ENCODE measurements at regions of chr17 and their contacts with region 1.

Region 1: DNA sequence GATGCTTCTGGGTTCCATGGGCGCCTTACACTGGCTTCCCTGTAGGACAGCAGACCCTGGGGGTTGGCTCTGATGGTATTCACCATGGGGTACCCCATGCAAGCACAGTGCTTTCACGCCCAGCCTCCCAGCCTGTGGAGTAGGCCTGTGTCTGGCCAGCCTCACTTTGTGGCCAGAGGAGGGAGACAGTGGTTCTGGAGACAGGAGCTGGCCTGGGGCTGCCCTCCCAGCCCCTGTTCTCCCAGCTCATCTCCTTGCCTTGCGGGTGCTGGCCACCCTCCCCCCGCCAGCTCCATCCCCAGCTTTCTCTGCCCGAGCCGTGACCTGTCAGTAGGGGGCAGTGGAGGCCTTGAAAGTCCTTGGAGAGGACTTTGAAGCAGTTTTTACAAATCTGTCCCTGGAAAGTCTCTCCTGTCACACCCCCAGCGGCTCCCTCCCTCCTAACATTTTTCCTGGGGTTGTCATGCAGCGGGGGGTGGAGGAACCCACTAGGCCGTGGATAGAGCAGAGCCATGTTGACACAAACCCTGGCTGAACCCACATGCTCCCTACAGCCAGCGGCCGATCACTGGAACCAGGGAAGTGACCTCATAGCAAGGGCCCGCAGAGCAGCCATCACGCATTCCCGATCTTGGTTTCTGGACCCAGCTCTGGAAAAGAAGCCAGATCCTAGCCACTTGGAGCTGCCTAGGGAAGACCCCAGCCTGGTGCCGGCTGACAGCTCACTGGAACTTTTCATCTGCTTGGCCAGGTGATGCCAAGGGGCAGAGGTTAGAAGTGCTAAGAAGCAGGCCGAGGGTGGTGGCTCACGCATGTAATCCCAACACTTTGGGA is 289.4 kb downstream of the SEC14L1 start:
- DNase-seq: peak; percentile 98
- H3K4me3 ChIP-seq: no peak overlapping the region
- H3K27me3 ChIP-seq: no peaks in the 10 kb centered on the region
- CTCF ChIP-seq: peak; percentile 91

Region 2: GRCh38 chr17:77331301-77331864 is 98.8 kb before region 1 on chr17:
- CTCF ChIA-PET with region 1: interaction called, 40 read pairs
- POLR2A ChIA-PET with region 1: no interaction called
- DNase-seq: no peak
- H3K4me3 ChIP-seq: no peak overlapping the region
- H3K27me3 ChIP-seq: no peaks in the 10 kb centered on the region
- CTCF ChIP-seq: peak; percentile 88

Region 3: DNA sequence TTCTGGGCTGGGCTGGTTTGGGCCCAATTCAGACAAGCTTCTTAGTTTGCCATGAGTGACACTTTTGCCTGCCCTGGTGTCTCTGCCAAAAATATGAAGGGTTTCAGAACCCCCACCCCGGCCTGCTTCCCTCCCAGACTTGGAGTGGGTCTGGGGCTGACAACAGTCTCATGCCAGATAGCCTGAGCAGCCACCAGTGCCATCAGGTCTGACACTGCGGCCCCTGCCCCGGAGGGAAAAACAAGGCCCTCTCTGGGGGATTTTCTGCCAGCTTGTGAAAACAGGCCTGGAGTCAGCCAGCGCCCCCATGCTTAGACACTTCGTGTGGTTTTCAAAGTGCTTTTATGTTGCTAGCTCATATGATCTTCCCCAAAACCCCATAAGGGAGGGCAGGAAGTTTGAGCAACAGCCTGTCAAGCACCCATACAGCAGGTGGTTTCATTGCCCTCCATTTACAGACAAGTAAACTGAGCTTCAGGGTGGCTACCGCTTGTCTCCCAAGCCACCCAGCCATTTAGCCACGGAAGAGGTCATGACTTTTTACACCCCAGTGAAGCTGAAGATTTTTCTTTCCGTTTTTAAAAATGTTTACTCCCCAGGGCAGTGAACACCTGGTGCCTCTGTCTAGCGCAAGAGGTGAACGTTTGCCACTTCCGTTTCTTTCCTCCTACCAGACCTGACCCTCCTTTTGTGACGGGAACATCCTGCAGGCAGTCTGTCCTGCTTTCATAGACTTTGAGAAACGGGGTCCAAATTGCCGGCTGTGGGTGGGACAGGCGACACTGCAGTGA is 11.2 kb after region 1 on chr17:
- CTCF ChIA-PET with region 1: interaction called, 17 read pairs
- POLR2A ChIA-PET with region 1: no interaction called
- DNase-seq: no peak
- H3K4me3 ChIP-seq: no peak overlapping the region
- H3K27me3 ChIP-seq: no peaks in the 10 kb centered on the region
- CTCF ChIP-seq: no peak

Region 4: DNA sequence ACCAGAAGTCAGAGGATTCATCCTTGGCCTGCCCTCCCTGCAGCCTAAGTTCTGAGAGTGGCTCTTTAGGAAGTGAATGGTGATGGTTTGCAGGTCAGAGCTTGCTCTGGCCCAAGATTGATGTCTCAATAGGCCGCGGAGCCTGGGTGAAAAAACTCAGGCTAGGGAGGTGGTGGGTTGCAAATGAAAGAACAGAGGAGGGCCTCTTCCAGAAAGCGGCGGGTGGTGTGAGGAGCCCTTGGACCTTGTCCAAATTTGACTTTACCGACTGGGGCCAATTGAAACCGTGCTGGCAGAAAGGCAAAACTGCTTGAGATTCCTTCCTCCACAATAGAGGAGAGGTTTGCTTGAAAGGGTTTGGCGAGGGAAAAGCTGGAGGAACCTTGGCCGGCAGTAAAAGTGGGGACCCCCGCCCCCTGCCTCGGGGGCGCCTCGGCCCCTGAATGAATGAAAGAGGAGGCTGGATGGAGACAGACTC is 41.9 kb after region 1 on chr17:
- CTCF ChIA-PET with region 1: interaction called, 27 read pairs
- POLR2A ChIA-PET with region 1: interaction called, 4 read pairs
- DNase-seq: no peak
- H3K4me3 ChIP-seq: no peak overlapping the region
- H3K27me3 ChIP-seq: no peaks in the 10 kb centered on the region
- CTCF ChIP-seq: no peak

Region 5: DNA sequence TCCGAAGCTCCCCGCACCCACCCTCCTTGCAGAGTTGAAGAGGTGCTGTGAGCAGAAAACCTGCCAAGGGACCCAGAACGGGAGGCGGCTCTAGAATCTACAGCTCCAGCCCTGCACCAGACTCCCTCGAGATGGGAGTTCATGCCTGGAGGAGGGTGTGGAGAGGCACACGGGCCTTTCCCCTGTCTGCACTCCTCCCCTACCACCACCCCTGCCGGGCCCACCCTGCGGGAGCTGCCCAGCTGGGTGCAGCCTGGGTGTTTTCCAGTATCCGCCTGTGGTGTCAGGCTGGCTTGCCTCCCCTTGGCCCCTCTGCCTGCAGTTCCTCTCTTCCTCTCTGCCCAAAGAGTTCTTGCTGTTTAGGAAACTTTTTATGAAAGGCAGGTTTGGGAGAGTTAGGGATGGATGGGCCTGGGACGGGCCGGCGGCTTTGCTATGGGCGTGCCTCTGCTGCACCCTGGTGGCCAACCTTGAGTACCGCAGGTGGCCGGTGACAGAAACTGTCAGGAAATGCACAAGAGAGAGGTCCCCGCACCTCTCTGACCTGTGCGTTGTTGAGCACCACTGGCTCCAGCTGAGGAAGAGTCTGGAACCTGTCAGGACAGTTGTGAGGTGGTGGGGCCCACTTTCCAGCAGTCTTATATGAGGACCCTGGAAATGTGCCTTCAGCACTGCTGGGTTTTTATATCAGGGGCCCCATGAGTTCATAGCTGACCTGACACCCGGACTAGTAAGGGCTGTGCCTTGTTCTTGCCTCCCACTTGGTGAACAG is 64.7 kb after region 1 on chr17:
- CTCF ChIA-PET with region 1: interaction called, 68 read pairs
- POLR2A ChIA-PET with region 1: no interaction called
- DNase-seq: no peak
- H3K4me3 ChIP-seq: no peak overlapping the region
- H3K27me3 ChIP-seq: no peaks in the 10 kb centered on the region
- CTCF ChIP-seq: peak; percentile 91

Measured in BJ (cell line).